Cardiac septum (tissue), 1 donor: ENCODE measurements at regions of chr5 and their contacts with region 1.

Region 1: DNA sequence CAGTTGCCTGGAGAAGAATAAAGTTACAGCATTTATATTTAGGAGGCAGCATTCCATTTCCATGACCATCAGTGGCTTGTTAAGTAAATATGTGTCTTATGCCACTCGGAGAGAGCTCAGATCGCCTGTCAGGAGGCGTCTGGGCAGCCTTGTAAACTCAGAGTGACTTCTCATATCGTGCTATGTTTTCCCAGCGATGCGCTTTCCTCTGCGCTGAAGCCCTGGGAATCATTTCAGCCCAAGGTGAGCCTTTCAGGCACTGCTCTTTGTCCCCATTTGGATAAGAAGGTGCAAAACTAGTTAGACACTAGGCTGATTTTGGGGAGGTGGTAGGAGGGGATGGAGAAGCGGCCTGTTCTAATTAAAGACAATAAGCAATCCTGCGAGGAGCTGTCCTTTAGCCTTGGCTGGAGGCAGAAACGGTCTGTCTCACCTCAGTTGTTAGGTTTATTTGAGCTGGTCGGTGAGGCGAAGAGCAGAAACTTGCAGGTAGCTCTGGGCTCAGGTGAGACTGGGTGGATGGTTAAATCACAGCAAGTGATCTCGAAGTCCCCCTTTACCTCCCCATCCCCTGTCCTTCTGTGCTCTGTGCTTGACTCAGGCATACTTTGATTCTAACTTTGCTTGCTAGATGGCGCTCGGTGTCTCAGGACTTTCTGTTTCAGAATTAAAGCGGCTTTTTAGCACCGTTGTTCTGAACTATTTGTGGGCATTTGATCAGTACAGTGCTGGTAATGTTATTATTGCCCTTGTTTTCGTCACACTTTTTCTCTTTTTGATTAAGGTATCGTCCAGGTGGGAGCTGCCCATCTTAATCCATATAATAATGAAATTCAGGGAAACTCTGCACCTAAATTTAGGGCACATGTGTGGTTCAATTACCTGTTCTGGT is 24.6 kb downstream of the NR2F1 start:
- DNase-seq: no peak

Region 2: GRCh38 chr5:93705896-93706295 is 98.3 kb after region 1 on chr5:
- intact Hi-C with region 1: no loop called
- DNase-seq: no peak

Region 3: DNA sequence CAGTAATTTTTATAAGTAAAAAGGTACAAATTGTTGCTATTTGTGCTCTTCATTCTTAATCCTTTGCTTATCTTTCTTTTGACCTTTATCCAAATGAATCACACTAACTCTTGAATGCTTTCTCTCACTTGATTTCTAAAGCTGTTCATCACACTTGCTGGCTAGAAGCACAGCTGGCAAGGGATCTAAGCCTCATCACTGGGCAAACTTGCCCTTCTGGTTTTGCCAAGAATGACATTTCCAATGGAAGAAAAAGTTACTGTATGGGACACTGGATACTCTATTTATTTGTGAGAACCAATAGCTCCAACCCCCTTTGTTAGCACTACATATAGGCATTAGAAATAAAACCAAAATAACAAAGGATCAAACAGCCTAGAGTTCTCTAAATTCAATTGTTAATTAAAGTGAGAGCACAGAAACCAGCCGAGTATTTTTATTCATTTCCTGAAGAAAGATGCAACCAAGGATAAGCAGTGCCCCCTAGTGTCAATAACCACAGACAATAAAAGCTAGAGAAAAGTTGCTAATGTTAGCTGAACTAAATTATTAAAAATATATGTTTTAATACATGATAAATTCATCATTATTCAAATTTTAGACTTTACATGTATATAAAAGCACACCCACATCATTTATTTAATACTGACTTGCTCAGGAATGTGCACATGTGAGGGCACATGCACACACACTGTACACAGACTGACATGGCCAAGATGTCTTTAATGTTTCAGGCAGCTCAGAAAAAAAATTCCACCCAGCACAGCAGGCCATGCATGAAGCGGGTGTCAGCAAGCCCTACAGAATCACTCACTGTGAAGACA is 193.6 kb after region 1 on chr5:
- intact Hi-C with region 1: loop called (anchors 2 kb)
- DNase-seq: no peak